Natural killer cell (primary cell): ENCODE measurements at regions of chr11 and their contacts with region 1.

Region 1: DNA sequence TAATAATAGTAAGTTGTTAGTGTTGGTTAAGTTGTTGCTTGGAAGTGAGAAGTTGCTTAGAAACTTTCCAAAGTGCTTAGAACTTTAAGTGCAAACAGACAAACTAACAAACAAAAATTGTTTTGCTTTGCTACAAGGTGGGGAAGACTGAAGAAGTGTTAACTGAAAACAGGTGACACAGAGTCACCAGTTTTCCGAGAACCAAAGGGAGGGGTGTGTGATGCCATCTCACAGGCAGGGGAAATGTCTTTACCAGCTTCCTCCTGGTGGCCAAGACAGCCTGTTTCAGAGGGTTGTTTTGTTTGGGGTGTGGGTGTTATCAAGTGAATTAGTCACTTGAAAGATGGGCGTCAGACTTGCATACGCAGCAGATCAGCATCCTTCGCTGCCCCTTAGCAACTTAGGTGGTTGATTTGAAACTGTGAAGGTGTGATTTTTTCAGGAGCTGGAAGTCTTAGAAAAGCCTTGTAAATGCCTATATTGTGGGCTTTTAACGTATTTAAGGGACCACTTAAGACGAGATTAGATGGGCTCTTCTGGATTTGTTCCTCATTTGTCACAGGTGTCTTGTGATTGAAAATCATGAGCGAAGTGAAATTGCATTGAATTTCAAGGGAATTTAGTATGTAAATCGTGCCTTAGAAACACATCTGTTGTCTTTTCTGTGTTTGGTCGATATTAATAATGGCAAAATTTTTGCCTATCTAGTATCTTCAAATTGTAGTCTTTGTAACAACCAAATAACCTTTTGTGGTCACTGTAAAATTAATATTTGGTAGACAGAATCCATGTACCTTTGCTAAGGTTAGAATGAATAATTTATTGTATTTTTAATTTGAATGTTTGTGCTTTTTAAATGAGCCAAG is 2.7 kb downstream of the NEAT1 start:
- DNase-seq: peak; percentile 75 to 96
- ATAC-seq: peak; percentile 36 to 68 (median 46)
- H3K4me3 ChIP-seq: peak overlapping the region; percentile 84
- H3K4me3 Mint-ChIP-seq: peak overlapping the region; percentile 95
- H3K27ac ChIP-seq: peak overlapping the region; percentile 100
- H3K27ac Mint-ChIP-seq: peak overlapping the region; percentile 98 to 100
- H3K4me1 ChIP-seq: peaks cover 57% of the 10 kb centered on the region
- H3K4me1 Mint-ChIP-seq: peaks cover 87 to 92% of the 10 kb centered on the region in 2 donors
- H3K27me3 ChIP-seq: no peaks in the 10 kb centered on the region
- H3K27me3 Mint-ChIP-seq: peaks cover 0 to 5% of the 10 kb centered on the region in 2 donors
- CTCF ChIP-seq: no peak

Region 2: DNA sequence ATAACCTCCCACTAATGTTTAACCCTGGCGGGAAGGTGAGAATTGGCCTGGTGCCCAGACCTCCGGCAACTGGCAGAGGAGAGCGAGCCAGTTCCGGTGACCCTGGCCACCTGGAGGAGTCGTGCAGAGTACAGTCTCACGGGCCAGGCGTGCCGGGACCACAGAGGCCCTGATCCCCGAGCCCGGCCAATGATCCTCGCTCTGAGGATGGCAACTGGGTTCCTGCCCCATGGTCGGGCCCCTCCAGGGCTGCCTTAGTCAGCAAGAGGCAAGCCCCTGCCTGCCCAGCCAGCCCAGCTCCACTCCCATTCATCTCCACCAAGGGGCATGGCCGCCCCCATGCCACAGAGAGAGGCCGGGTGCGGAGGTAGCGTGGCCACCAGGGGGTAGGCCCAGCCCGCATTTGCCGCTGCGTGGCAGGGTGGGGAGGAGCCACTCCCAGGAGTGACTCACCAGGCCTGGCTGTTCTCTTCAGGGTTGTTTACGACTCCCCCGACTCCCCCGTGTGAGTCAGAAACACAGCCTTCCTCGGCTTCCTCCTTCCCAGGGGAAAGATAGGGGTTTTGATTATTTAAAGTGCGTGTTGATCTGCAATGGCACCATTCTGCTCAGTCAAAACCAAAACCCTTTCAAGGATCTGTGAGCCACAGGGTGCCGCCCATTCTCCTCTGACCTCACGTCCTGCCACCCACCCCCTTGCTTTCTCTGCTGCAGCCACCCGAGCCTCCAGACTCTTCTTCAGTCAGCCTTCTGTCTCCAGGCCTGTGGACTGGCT is 43.1 kb before region 1 on chr11 and contains the start of gene SLC25A45:
- intact Hi-C with region 1: loop called (anchors 1 kb)
- DNase-seq: peak; percentile 90 to 94
- ATAC-seq: peak; percentile 75 to 89 (median 79)
- H3K4me3 ChIP-seq: peak within 1 kb of the TSS; percentile 51
- H3K4me3 Mint-ChIP-seq: peak within 1 kb of the TSS; percentile 89
- H3K27ac ChIP-seq: peak within 1 kb of the TSS; percentile 92
- H3K27ac Mint-ChIP-seq: peak within 1 kb of the TSS; percentile 99
- H3K4me1 ChIP-seq: peaks cover 81% of the 10 kb centered on the region
- H3K4me1 Mint-ChIP-seq: peaks cover 39 to 56% of the 10 kb centered on the region in 2 donors
- H3K27me3 ChIP-seq: no peaks in the 10 kb centered on the region
- H3K27me3 Mint-ChIP-seq: no peaks in the 10 kb centered on the region
- CTCF ChIP-seq: peak; percentile 83
- total RNA-seq, gene SLC25A45: 50.9 to 61.1 (median 61.0) TPM

Region 3: GRCh38 chr11:65459552-65459951 is 34.2 kb after region 1 on chr11:
- intact Hi-C with region 1: no loop called
- DNase-seq: no peak
- ATAC-seq: no peak
- H3K4me3 ChIP-seq: no peak overlapping the region
- H3K4me3 Mint-ChIP-seq: no peak overlapping the region
- H3K27ac ChIP-seq: no peak overlapping the region
- H3K27ac Mint-ChIP-seq: no peak overlapping the region
- H3K4me1 ChIP-seq: peaks cover 14% of the 10 kb centered on the region
- H3K4me1 Mint-ChIP-seq: peaks cover 10 to 16% of the 10 kb centered on the region in 2 donors
- H3K27me3 ChIP-seq: no peaks in the 10 kb centered on the region
- H3K27me3 Mint-ChIP-seq: peaks cover 0 to 3% of the 10 kb centered on the region in 2 donors
- CTCF ChIP-seq: no peak

Region 4: DNA sequence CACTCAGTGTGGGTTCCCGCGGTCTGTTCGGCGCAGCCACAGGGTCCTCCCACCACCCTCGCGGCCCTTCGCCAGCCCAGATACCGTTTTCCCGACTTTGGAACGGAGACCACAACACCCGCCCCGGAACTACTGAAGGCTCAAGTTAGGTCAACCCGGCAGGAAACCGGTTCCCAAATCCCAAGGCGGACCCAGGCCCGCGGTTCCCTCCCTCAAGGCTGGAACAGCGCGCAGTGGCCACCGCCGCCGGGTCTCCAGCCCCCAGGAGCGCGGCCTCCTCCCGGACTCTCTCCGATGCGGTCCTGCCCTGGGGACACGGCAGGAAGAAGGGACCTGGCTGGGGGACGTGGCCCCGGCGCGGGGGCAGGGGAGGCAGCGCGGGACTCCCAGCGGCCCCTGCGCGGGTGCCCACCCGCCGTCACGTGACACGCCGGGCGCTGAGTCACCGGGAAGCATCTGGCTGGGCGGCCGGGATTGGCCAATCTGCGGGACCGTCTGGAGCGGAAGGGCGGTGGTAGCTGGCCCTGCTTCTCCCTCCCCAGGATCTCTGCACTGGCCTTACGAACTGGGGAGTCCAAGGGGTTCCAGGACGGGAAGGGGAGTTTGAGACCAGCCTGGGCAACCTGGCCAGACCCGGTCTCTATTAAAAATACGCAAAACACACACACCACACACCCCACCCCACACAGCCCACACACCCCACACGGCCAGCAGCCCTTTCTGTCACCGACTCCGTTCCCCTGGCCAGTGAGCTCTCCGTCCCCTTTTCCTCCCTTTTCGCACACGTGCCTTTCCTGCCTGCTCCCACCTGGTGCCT is 52.0 kb after region 1 on chr11:
- intact Hi-C with region 1: loop called (anchors 2 kb)
- DNase-seq: peak; percentile 92
- ATAC-seq: peak; percentile 84 to 94 (median 92)
- H3K4me3 ChIP-seq: peak overlapping the region; percentile 78
- H3K4me3 Mint-ChIP-seq: peak overlapping the region; percentile 98
- H3K27ac ChIP-seq: peak overlapping the region; percentile 95
- H3K27ac Mint-ChIP-seq: peak overlapping the region; percentile 94 to 99
- H3K4me1 ChIP-seq: peaks cover 25% of the 10 kb centered on the region
- H3K4me1 Mint-ChIP-seq: peaks cover 15 to 17% of the 10 kb centered on the region in 2 donors
- H3K27me3 ChIP-seq: no peaks in the 10 kb centered on the region
- H3K27me3 Mint-ChIP-seq: no peaks in the 10 kb centered on the region
- CTCF ChIP-seq: no peak

Region 5: GRCh38 chr11:65497141-65498041 is 72.1 kb after region 1 on chr11:
- intact Hi-C with region 1: loop called (anchors 1 kb)
- DNase-seq: peak; percentile 98 to 99
- ATAC-seq: peak; percentile 81 to 95 (median 84)
- H3K4me3 ChIP-seq: peak overlapping the region; percentile 75
- H3K4me3 Mint-ChIP-seq: no peak overlapping the region
- H3K27ac ChIP-seq: peak overlapping the region; percentile 96
- H3K27ac Mint-ChIP-seq: no peak overlapping the region
- H3K4me1 ChIP-seq: peaks cover 40% of the 10 kb centered on the region
- H3K4me1 Mint-ChIP-seq: peaks cover 13 to 17% of the 10 kb centered on the region in 2 donors
- H3K27me3 ChIP-seq: no peaks in the 10 kb centered on the region
- H3K27me3 Mint-ChIP-seq: no peaks in the 10 kb centered on the region
- CTCF ChIP-seq: no peak